GM12878 (cell line): ENCODE measurements at regions of chr4 and their contacts with region 1.

Region 1: GRCh38 chr4:110516106-110516922 is 40.4 kb downstream of the ENPEP start:
- DNase-seq: peak; percentile 30
- ATAC-seq: peak; percentile 94
- H3K4me3 ChIP-seq: peak overlapping the region; percentile 64; the same call in 1 of the 2 replicates
- H3K27ac ChIP-seq: no peak overlapping the region; the same call in 1 of the 2 replicates
- H3K4me1 ChIP-seq: no peaks in the 10 kb centered on the region
- H3K27me3 ChIP-seq: no peaks in the 10 kb centered on the region
- CTCF ChIP-seq: peak; percentile 76 to 82 (median 82)
- EP300 ChIP-seq: no peak
- POLR2A ChIP-seq: no peak
- RAD21 ChIP-seq: peak; percentile 54

Region 2: GRCh38 chr4:109424093-109424841 is 1092.0 kb before region 1 on chr4:
- CTCF ChIA-PET with region 1: interaction called, 3 read pairs
- POLR2A ChIA-PET with region 1: no interaction called
- RAD21 ChIA-PET with region 1: no interaction called
- SMC1A ChIA-PET with region 1: no interaction called
- in situ Hi-C with region 1: no loop called
- intact Hi-C with region 1: loop called (anchors 5 kb)
- DNase-seq: no peak
- ATAC-seq: peak; percentile 68
- H3K4me3 ChIP-seq: no peak overlapping the region
- H3K27ac ChIP-seq: no peak overlapping the region
- H3K4me1 ChIP-seq: no peaks in the 10 kb centered on the region
- H3K27me3 ChIP-seq: no peaks in the 10 kb centered on the region
- CTCF ChIP-seq: no peak
- EP300 ChIP-seq: no peak
- POLR2A ChIP-seq: no peak
- RAD21 ChIP-seq: no peak

Region 3: DNA sequence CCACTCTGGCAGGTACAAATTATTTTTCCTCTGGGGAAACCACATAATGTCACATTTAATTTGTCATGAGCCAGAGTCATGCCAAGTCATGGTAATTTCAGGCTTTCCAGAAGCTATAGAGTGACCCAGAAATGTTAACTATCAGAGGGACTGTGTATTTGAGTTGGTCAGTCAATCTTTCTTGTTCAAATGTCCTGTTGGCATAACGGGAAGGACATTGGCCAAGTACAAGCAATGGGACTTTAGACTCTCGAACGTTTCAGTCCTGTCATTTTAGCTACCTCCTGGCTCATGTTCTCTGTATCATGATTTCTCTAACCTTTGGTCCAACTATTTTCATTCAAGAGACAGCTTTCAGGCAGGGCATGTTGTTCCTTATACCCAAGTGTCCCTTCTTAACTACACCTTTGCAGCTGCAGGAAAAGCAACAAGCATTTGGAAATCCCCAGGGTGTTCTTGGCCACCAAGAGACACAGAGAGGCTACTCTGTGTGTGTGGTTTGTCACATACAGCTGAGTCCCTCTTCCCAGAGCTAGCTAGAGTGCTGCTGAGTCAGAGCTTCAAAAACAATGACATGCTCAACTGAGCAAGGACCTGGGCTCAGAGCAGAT is 461.1 kb before region 1 on chr4:
- CTCF ChIA-PET with region 1: interaction called, 132 read pairs
- POLR2A ChIA-PET with region 1: no interaction called
- RAD21 ChIA-PET with region 1: interaction called, 30 read pairs
- SMC1A ChIA-PET with region 1: interaction called, 14 read pairs
- in situ Hi-C with region 1: no loop called
- intact Hi-C with region 1: loop called (anchors 2 kb)
- DNase-seq: peak; percentile 80
- ATAC-seq: peak; percentile 93
- H3K4me3 ChIP-seq: peak overlapping the region; percentile 39; the same call in 1 of the 2 replicates
- H3K27ac ChIP-seq: peak overlapping the region; percentile 68
- H3K4me1 ChIP-seq: peaks cover 25% of the 10 kb centered on the region
- H3K27me3 ChIP-seq: no peaks in the 10 kb centered on the region
- CTCF ChIP-seq: no peak
- EP300 ChIP-seq: 0 out of 4 replicates have a peak, but pooled peaks of 1 of the 2 experiments have one; percentile 31
- POLR2A ChIP-seq: no peak
- RAD21 ChIP-seq: no peak

Region 4: GRCh38 chr4:110310795-110311194 is 205.5 kb before region 1 on chr4:
- CTCF ChIA-PET with region 1: interaction called, 118 read pairs
- POLR2A ChIA-PET with region 1: no interaction called
- RAD21 ChIA-PET with region 1: interaction called, 47 read pairs
- SMC1A ChIA-PET with region 1: interaction called, 91 read pairs
- in situ Hi-C with region 1: loop called (anchors 5 kb)
- intact Hi-C with region 1: loop called (anchors 1 kb)
- DNase-seq: peak; percentile 17
- ATAC-seq: peak; percentile 88
- H3K4me3 ChIP-seq: no peak overlapping the region
- H3K27ac ChIP-seq: no peak overlapping the region
- H3K4me1 ChIP-seq: no peaks in the 10 kb centered on the region
- H3K27me3 ChIP-seq: no peaks in the 10 kb centered on the region
- CTCF ChIP-seq: no peak
- EP300 ChIP-seq: no peak
- POLR2A ChIP-seq: no peak
- RAD21 ChIP-seq: no peak

Region 5: DNA sequence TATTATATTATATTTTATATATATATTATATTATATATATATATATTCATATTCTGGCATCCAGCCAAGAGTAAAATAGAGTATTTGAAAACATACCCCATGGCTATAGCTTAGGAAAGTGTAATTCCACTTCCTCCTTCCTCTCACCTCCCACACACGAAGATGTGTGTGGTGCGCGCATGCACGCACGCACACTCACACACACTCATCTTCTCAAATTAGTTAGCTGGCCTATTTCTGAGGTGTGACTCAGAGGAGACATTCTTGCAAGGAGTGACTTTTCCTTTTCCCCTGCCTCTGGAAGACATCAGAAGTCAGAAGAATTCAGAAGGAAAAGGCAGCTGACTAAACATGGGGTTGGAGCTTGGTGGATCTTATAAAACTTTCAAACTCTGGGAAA is 31.6 kb before region 1 on chr4:
- CTCF ChIA-PET with region 1: interaction called, 12 read pairs
- POLR2A ChIA-PET with region 1: no interaction called
- RAD21 ChIA-PET with region 1: no interaction called
- SMC1A ChIA-PET with region 1: interaction called, 7 read pairs
- in situ Hi-C with region 1: no loop called
- intact Hi-C with region 1: no loop called
- DNase-seq: no peak
- ATAC-seq: no peak
- H3K4me3 ChIP-seq: no peak overlapping the region
- H3K27ac ChIP-seq: no peak overlapping the region; the same call in 1 of the 2 replicates
- H3K4me1 ChIP-seq: peaks cover 13% of the 10 kb centered on the region
- H3K27me3 ChIP-seq: no peaks in the 10 kb centered on the region
- CTCF ChIP-seq: no peak
- EP300 ChIP-seq: no peak
- POLR2A ChIP-seq: no peak
- RAD21 ChIP-seq: no peak

Region 6: DNA sequence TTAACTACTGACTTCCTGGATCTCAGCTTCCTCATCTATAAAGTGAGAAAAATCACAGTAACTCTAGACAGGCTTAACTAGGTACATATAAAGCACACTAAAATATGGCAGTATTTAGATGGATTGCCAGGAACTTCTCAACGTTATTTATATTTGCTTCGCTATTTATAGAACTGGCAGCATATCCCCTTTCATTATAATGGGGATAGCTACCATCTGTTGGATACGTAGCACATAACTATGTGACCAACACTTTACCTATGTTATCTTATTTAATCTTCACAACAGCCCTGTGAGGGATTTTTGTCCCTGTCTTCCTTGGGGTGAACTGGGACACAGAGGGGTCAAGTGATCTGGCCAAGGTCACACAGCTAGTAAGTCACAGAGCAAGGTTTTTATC is 24.3 kb after region 1 on chr4:
- CTCF ChIA-PET with region 1: interaction called, 12 read pairs
- POLR2A ChIA-PET with region 1: no interaction called
- RAD21 ChIA-PET with region 1: no interaction called
- SMC1A ChIA-PET with region 1: interaction called, 5 read pairs
- in situ Hi-C with region 1: no loop called
- intact Hi-C with region 1: no loop called
- DNase-seq: no peak
- ATAC-seq: no peak
- H3K4me3 ChIP-seq: no peak overlapping the region
- H3K27ac ChIP-seq: no peak overlapping the region
- H3K4me1 ChIP-seq: no peaks in the 10 kb centered on the region
- H3K27me3 ChIP-seq: no peaks in the 10 kb centered on the region
- CTCF ChIP-seq: no peak
- EP300 ChIP-seq: no peak
- POLR2A ChIP-seq: no peak
- RAD21 ChIP-seq: no peak

Region 7: GRCh38 chr4:110681381-110681780 is 165.1 kb after region 1 on chr4:
- CTCF ChIA-PET with region 1: no interaction called
- POLR2A ChIA-PET with region 1: no interaction called
- RAD21 ChIA-PET with region 1: no interaction called
- SMC1A ChIA-PET with region 1: no interaction called
- in situ Hi-C with region 1: no loop called
- intact Hi-C with region 1: no loop called
- DNase-seq: no peak
- ATAC-seq: no peak
- H3K4me3 ChIP-seq: no peak overlapping the region
- H3K27ac ChIP-seq: no peak overlapping the region
- H3K4me1 ChIP-seq: no peaks in the 10 kb centered on the region
- H3K27me3 ChIP-seq: no peaks in the 10 kb centered on the region
- CTCF ChIP-seq: no peak
- EP300 ChIP-seq: no peak
- POLR2A ChIP-seq: no peak
- RAD21 ChIP-seq: no peak